ENCODE measurements at regions of chr3 and their contacts with region 1.

Region 1: GRCh38 chr3:129490242-129491045 is 38.0 kb upstream of the RHO start:
- DNase-seq: peak; percentile 85
- H3K4me3 ChIP-seq: no peak overlapping the region
- H3K27ac ChIP-seq: peak overlapping the region; percentile 40
- H3K27me3 ChIP-seq: no peaks in the 10 kb centered on the region
- CTCF ChIP-seq: peak; percentile 94

Region 2: DNA sequence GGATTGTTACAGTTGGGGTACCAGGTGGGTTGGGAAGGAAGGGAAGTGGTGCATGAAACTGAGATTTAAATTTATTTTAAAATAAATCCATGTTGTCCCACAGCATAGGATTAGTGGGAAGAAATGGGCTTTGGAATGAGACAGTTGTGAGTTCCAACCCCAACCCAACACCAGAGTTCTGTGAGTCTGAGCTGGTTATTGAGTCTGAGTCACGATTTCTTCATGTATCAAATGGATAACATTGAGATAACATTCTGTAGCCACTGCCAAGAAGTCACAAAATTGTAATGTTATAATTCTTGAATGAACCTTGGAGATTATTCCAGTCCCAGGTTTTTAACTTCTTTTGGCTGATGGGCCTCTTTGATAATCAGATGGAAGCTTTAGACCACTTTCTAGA is 36.7 kb before region 1 on chr3:
- CTCF ChIA-PET with region 1: interaction called, 12 read pairs
- POLR2A ChIA-PET with region 1: interaction called, 3 read pairs
- DNase-seq: no peak
- H3K4me3 ChIP-seq: no peak overlapping the region
- H3K27ac ChIP-seq: no peak overlapping the region
- H3K27me3 ChIP-seq: no peaks in the 10 kb centered on the region
- CTCF ChIP-seq: no peak

Region 3: DNA sequence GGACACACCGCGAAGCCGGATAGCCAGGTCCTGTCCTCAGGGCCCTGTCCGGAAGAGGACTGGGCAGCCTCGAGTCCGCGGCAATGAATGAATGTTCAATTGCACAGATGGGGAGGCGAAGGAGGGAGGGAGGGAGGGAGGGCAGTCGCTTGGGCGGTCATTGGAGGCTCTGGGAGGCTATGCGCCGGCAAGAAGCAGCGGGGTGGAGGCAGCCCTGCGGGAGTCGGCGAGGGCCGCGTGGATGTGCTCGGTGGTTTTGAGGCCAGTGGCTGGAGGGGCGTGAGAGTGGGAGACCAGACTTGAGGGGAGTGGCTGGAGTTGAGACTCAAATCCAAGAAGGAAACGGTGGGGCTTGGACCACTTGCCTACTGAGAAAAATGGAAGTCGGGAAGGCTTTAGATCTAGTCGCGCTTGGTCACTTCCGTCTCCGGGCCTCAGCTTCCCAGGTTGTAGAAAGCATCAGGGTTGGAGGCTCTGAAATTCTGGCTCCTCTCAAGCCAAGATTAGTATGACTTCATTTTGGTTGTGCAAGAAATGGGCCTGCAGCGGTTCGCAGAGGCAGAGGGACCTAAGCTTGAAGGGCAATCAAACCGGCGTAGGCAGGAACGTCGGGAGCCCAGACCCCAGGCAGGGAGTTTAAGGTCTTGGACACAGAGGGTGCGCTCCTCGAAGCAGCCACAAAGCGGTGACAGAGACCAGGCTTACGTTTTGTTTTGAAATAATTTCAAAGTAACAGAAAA is 137.2 kb after region 1 on chr3:
- CTCF ChIA-PET with region 1: interaction called, 24 read pairs
- POLR2A ChIA-PET with region 1: interaction called, 3 read pairs
- DNase-seq: no peak
- H3K4me3 ChIP-seq: peak overlapping the region; percentile 50
- H3K27ac ChIP-seq: peak overlapping the region; percentile 80
- H3K27me3 ChIP-seq: no peaks in the 10 kb centered on the region
- CTCF ChIP-seq: peak; percentile 81

Region 4: DNA sequence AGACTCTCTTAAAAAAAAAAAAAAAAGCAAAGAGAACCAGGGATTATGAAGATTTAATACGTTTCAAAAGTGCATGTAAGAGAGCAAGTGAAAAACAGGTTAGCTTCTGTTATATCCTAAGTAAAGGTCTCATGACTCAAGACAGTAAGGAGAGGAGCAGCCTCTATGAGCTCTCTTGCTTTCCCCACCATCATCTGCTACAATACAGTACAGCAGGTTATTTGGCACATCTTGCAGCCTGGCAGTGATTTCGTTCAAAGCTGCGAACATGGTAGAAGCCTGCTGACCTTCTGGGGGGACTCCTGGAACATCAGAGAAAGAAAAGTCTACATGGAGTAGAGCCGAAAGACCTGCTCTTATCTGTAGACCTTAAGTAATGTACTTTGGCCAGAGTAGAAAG is 245.2 kb after region 1 on chr3:
- CTCF ChIA-PET with region 1: no interaction called
- POLR2A ChIA-PET with region 1: no interaction called
- DNase-seq: no peak
- H3K4me3 ChIP-seq: no peak overlapping the region
- H3K27ac ChIP-seq: no peak overlapping the region
- H3K27me3 ChIP-seq: no peaks in the 10 kb centered on the region
- CTCF ChIP-seq: no peak

Region 5: DNA sequence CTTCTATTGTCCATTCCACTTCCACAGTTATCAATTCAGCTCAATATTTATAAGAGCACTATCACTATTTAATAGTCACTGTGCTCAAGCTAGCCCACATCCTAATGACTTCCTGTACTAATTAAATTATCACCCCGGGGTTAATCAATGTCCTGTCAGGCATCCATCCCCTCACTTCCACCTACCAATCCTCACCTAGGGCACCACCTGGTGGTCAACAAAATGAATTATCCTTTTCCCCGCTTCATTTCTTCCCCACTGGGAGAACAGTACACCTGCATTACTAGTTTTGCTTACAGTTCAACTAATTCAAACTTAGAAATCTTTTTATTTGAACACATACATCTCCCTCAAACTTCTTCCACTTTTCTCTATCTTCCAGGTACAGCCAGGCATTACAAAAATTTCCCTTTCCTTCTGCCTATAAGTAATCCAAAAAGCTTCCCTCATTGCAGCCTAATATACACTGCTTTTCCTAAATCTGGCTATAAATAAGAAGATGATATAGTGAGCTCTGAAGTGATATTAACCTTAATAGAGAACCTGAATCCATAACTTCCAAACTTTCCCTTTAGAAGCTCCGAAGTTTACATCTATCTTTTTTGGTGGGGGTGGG is 334.6 kb after region 1 on chr3:
- CTCF ChIA-PET with region 1: interaction called, 46 read pairs
- POLR2A ChIA-PET with region 1: no interaction called
- DNase-seq: peak; percentile 7
- H3K4me3 ChIP-seq: no peak overlapping the region
- H3K27ac ChIP-seq: no peak overlapping the region
- H3K27me3 ChIP-seq: no peaks in the 10 kb centered on the region
- CTCF ChIP-seq: peak; percentile 71